ENCODE measurements at regions of chr1 and their contacts with region 1.

Region 1: GRCh38 chr1:93374334-93375106 is 28.8 kb downstream of the DR1 start:
- DNase-seq: no peak
- H3K4me3 ChIP-seq: no peak overlapping the region
- H3K4me3 Mint-ChIP-seq: no peak overlapping the region
- H3K27ac ChIP-seq: no peak overlapping the region
- H3K27ac Mint-ChIP-seq: peak overlapping the region in 1 of 7 donors; percentile 27
- H3K4me1 ChIP-seq: no peaks in the 10 kb centered on the region
- H3K4me1 Mint-ChIP-seq: peaks cover 4% of the 10 kb centered on the region
- H3K27me3 ChIP-seq: no peaks in the 10 kb centered on the region
- H3K27me3 Mint-ChIP-seq: no peaks in the 10 kb centered on the region
- CTCF ChIP-seq: no peak

Region 2: DNA sequence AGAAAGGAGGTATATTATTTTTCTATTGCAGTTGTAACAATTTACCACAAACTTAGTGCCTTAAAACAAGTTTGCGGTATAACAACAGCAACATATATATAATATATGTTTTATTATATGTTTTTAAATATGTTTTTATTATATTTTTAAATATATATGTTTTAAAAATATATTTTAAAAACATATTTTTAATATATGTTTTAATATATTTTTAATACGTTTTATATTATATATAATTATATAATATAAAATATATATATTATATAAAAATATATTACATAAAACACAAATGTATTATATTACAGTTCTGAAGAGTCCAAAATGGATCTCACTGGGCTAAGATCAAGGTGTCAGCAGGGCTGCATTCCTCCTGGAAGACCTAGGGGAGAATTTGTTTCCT is 45.9 kb after region 1 on chr1:
- intact Hi-C with region 1: loop called in 1 of 2 experiments (anchors 5 kb)
- DNase-seq: no peak
- H3K4me3 ChIP-seq: no peak overlapping the region
- H3K4me3 Mint-ChIP-seq: no peak overlapping the region
- H3K27ac ChIP-seq: no peak overlapping the region
- H3K27ac Mint-ChIP-seq: no peak overlapping the region
- H3K4me1 ChIP-seq: peaks cover 3 to 5% of the 10 kb centered on the region in 2 donors
- H3K4me1 Mint-ChIP-seq: peaks cover 8% of the 10 kb centered on the region
- H3K27me3 ChIP-seq: no peaks in the 10 kb centered on the region
- H3K27me3 Mint-ChIP-seq: no peaks in the 10 kb centered on the region
- CTCF ChIP-seq: no peak

Measured in CD14-positive monocyte (primary cell).